ENCODE measurements at regions of chr10 and their contacts with region 1.

Region 1: DNA sequence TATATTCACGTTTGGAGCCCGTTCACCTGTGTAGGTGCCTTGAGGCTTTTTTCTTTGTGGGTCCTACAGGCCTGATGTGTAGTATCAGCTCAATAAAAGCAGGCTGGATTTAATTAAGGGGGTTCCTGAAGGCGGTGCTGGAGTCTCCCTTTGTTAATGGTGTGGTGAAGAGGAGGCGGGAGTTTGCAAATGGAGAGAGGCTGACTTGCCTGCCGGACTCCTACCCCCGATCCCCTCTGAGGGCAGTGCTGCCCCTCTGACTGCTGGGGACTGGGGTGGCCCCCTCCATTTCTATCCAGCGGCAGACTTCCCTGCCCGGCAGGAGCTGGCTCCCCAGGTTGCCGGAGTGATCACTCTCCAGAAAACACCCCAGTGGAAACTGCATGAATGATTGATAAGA is 45.1 kb downstream of the ZMIZ1 start:
- DNase-seq: no peak
- H3K4me3 ChIP-seq: no peak overlapping the region
- H3K27ac ChIP-seq: peak overlapping the region; percentile 75 to 78
- H3K4me1 ChIP-seq: peaks cover 13 to 25% of the 10 kb centered on the region in 2 donors
- H3K27me3 ChIP-seq: no peaks in the 10 kb centered on the region
- CTCF ChIP-seq: no peak
- POLR2A ChIP-seq: no peak

Region 2: GRCh38 chr10:78953113-78953798 is 160.6 kb before region 1 on chr10:
- intact Hi-C with region 1: no loop called
- DNase-seq: no peak
- H3K4me3 ChIP-seq: no peak overlapping the region
- H3K27ac ChIP-seq: peak overlapping the region; percentile 40 to 45
- H3K4me1 ChIP-seq: no peaks in the 10 kb centered on the region
- H3K27me3 ChIP-seq: no peaks in the 10 kb centered on the region
- CTCF ChIP-seq: no peak
- POLR2A ChIP-seq: no peak

Region 3: DNA sequence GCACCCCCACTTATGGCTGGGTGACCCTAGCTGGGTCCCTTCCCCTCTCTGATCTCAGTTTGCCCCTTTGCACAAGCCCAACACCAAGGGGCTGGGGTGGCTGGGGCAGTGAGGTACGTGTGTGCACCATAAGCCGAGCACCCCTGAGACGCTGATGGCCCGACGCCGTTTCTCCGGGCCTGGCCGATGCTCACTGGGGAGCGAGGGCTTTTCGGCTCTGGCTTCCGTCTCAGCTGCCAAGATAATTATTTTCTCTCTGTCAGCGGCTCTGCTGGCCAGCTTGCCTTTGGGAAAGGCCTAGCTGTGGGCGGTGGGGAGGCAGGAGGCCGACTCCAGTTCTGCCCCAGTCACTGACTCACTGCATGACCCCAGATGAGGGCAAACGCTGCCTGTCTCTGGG is 46.0 kb after region 1 on chr10:
- intact Hi-C with region 1: loop called (anchors 1 kb)
- DNase-seq: no peak
- H3K4me3 ChIP-seq: peak overlapping the region in 1 of 3 donors; percentile 40
- H3K27ac ChIP-seq: peak overlapping the region; percentile 87 to 92
- H3K4me1 ChIP-seq: peaks cover 16 to 35% of the 10 kb centered on the region in 2 donors
- H3K27me3 ChIP-seq: no peaks in the 10 kb centered on the region
- CTCF ChIP-seq: no peak
- POLR2A ChIP-seq: no peak